ENCODE measurements at regions of chr17 and their contacts with region 1.

Region 1: DNA sequence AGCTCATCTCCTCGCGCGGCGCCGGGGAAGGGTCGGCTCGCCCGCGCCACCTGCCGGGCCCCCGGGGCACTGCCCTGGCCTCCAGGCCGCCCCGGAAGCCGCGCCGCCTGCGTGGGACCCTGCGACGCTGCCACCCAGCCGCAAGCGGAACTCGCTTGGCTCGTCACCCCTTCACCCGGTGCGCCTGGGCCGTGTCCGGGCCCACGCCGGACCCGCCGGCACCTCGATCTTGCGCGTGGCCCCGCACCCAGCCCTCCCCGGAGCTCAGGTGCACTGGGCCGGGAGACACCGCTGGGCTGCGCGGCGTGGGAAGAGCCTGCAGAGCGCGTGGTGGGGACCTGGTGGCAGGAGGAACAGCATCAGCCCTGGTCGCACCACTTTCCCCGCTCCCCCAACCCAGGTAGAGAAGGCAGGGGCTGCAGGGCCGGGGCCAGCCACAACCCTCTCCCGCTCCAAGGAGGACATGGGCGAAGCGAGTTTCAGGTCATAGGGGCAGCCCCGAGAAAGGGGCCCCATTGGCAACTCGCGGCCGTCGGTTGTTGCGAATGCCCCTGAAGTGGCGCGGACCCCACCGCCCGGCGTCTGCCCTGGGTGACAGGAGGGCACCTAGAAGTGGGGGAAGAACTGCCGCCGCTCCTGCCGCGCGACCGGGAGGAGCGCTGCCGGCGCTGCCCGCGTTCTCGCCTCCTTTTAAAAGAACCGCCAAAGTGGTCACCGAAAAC is 363 bp upstream of the MIF4GD start:
- DNase-seq: peak; percentile 92
- H3K4me3 Mint-ChIP-seq: peak overlapping the region; percentile 85
- H3K27ac Mint-ChIP-seq: peak overlapping the region; percentile 89
- H3K4me1 Mint-ChIP-seq: peaks cover 47% of the 10 kb centered on the region
- H3K27me3 Mint-ChIP-seq: no peaks in the 10 kb centered on the region

Region 2: GRCh38 chr17:75238684-75239191 is 32.7 kb before region 1 on chr17:
- CTCF ChIA-PET with region 1: interaction called, 23 read pairs
- POLR2A ChIA-PET with region 1: interaction called, 20 read pairs
- DNase-seq: peak; percentile 67
- H3K4me3 Mint-ChIP-seq: peak overlapping the region; percentile 57
- H3K27ac Mint-ChIP-seq: peak overlapping the region; percentile 87
- H3K4me1 Mint-ChIP-seq: peaks cover 41% of the 10 kb centered on the region
- H3K27me3 Mint-ChIP-seq: no peaks in the 10 kb centered on the region

Region 3: GRCh38 chr17:75250009-75250471 is 21.4 kb before region 1 on chr17:
- CTCF ChIA-PET with region 1: interaction called, 35 read pairs
- POLR2A ChIA-PET with region 1: interaction called, 27 read pairs
- DNase-seq: peak; percentile 77
- H3K4me3 Mint-ChIP-seq: peak overlapping the region; percentile 73
- H3K27ac Mint-ChIP-seq: peak overlapping the region; percentile 86
- H3K4me1 Mint-ChIP-seq: peaks cover 40% of the 10 kb centered on the region
- H3K27me3 Mint-ChIP-seq: no peaks in the 10 kb centered on the region

Region 4: DNA sequence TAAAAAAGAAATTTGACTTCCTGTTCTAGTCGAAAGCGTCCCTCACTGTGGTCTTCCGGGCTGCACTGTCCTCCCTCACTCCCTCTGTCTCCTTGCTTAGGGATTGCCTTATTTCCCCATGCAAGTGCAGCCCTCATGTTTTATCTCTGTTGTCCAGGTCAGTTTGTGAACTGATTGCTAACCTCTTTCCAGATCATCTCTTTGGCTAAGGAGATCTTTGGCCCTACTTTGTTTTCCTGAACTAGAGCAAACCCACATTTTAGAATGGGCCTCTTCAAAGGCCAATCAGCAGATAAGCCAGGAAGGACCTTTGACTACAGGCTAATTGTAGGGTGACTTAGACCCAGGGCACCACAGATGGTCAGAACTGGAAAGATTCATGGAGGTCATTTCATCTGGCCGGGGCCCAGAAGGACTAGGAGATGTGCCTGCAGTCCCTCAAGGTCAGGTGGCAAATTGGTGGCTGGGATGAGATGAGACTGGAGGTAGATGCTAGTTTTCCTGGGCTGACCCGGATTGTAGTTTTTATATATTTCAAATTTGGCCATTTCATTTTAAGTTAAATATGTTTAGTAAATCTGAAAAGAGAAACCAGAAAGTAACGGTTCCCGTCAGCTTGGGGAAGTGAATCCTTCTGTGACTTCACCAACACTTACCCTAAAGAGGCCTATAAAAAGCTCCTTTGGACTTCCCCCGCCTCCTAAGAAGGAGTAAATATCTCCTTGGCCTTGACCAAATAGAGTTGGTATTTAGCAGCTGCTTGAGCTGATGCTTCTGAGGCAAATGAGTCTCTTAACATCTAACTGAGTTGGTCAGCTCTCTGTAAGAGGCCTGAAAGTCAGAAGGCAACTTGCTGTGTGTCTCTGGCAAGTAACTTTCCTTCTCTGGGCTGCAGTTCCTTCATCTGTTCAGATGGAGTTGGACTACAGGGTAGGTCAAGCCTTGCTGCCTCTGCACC is 24.1 kb after region 1 on chr17:
- CTCF ChIA-PET with region 1: interaction called, 105 read pairs
- POLR2A ChIA-PET with region 1: interaction called, 124 read pairs
- DNase-seq: no peak
- H3K4me3 Mint-ChIP-seq: peak overlapping the region; percentile 46
- H3K27ac Mint-ChIP-seq: peak overlapping the region; percentile 87
- H3K4me1 Mint-ChIP-seq: peaks cover 36% of the 10 kb centered on the region
- H3K27me3 Mint-ChIP-seq: no peaks in the 10 kb centered on the region

Region 5: GRCh38 chr17:75393523-75394331 is 122.3 kb after region 1 on chr17:
- CTCF ChIA-PET with region 1: interaction called, 17 read pairs
- POLR2A ChIA-PET with region 1: interaction called, 10 read pairs
- DNase-seq: peak; percentile 86
- H3K4me3 Mint-ChIP-seq: peak overlapping the region; percentile 90
- H3K27ac Mint-ChIP-seq: peak overlapping the region; percentile 59
- H3K4me1 Mint-ChIP-seq: peaks cover 72% of the 10 kb centered on the region
- H3K27me3 Mint-ChIP-seq: no peaks in the 10 kb centered on the region

Region 6: GRCh38 chr17:75412455-75413317 is 141.3 kb after region 1 on chr17:
- CTCF ChIA-PET with region 1: interaction called, 11 read pairs
- POLR2A ChIA-PET with region 1: interaction called, 7 read pairs
- DNase-seq: peak; percentile 81
- H3K4me3 Mint-ChIP-seq: no peak overlapping the region
- H3K27ac Mint-ChIP-seq: peak overlapping the region; percentile 29
- H3K4me1 Mint-ChIP-seq: peaks cover 26% of the 10 kb centered on the region
- H3K27me3 Mint-ChIP-seq: peaks cover 12% of the 10 kb centered on the region